IMR-90 (cell line): ENCODE measurements at regions of chr3 and their contacts with region 1.

Region 1: GRCh38 chr3:18307529-18307928 is 117.6 kb downstream of the SATB1 start:
- DNase-seq: no peak
- ATAC-seq: no peak
- H3K4me3 ChIP-seq: no peak overlapping the region
- H3K27ac ChIP-seq: no peak overlapping the region
- H3K4me1 ChIP-seq: no peaks in the 10 kb centered on the region
- H3K27me3 ChIP-seq: no peaks in the 10 kb centered on the region
- CTCF ChIP-seq: no peak
- POLR2A ChIP-seq: no peak
- RAD21 ChIP-seq: no peak

Region 2: DNA sequence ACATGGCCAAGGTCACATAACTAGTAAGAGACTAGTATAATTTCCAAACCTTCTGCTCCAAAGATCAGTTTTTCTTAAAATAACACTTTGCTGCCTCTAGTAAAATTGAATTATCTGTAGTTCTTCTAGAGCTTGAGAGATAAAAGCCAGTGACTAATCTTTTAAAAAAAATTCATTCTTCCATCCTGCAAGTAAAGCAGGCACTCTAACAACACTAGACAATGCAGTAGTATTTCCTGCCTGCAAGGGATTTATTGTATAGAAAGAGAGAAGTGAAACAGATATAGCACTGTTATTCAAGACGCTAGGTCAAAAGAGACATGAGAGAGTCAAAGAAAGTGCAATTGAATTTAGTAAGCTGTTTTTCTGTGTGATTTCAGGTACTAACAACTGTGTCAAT is 405.6 kb before region 1 on chr3:
- CTCF ChIA-PET with region 1: no interaction called
- POLR2A ChIA-PET with region 1: interaction called, 17 read pairs
- dilution Hi-C with region 1: no loop called
- in situ Hi-C with region 1: no loop called
- intact Hi-C with region 1: no loop called
- DNase-seq: no peak
- ATAC-seq: no peak
- H3K4me3 ChIP-seq: no peak overlapping the region
- H3K27ac ChIP-seq: no peak overlapping the region
- H3K4me1 ChIP-seq: no peaks in the 10 kb centered on the region
- H3K27me3 ChIP-seq: no peaks in the 10 kb centered on the region
- CTCF ChIP-seq: no peak
- POLR2A ChIP-seq: no peak
- RAD21 ChIP-seq: no peak